ENCODE measurements at regions of chr9 and their contacts with region 1.

Region 1: DNA sequence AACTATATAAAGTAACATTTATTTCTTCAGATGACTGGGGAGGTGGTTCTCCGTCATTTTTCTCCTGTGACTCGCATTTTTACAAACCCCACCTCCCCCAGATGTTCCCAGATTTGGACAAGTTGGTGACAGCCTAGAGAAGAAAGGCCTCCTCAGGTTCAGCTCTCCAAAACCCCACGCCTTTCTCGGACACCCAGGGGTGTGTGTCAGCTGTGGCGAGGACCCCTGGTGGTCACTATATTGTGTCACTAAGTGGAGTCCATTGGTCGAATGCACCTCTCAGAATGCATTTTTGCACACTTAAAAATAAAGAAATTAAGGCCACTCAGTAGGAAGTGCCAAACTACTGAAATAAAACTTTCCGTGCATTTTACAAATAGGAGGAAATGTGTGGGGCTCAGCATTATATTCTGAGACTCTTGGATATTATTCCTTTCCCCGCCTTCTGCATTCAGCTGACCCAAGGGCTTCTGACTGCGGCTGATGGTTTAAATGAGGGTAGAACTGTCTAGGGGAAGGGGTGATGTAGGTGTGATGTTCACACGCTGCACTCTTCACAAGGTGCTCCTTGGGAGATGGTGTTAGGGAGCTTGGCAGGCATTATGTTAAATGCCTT is 47.6 kb downstream of the ACO1 start:
- DNase-seq: no peak
- H3K4me3 ChIP-seq: no peak overlapping the region
- H3K27ac ChIP-seq: peak overlapping the region; percentile 52; the same call in 1 of the 2 replicates
- H3K4me1 ChIP-seq: peaks cover 18% of the 10 kb centered on the region
- H3K27me3 ChIP-seq: no peaks in the 10 kb centered on the region
- CTCF ChIP-seq: peak; percentile 40; the same call in 1 of the 2 replicates

Region 2: GRCh38 chr9:32360983-32361673 is 70.9 kb before region 1 on chr9:
- CTCF ChIA-PET with region 1: no interaction called
- POLR2A ChIA-PET with region 1: no interaction called
- intact Hi-C with region 1: no loop called
- DNase-seq: no peak
- H3K4me3 ChIP-seq: no peak overlapping the region
- H3K27ac ChIP-seq: no peak overlapping the region
- H3K4me1 ChIP-seq: no peaks in the 10 kb centered on the region
- H3K27me3 ChIP-seq: no peaks in the 10 kb centered on the region
- CTCF ChIP-seq: no peak

Region 3: GRCh38 chr9:32384364-32385151 is 47.5 kb before region 1 on chr9 and contains the start of gene ACO1:
- CTCF ChIA-PET with region 1: interaction called, 6 read pairs
- POLR2A ChIA-PET with region 1: interaction called, 4 read pairs
- intact Hi-C with region 1: loop called (anchors 2 kb)
- DNase-seq: peak; percentile 62 to 87
- H3K4me3 ChIP-seq: peak within 1 kb of the TSS; percentile 84
- H3K27ac ChIP-seq: no peak within 1 kb of the TSS
- H3K4me1 ChIP-seq: no peaks in the 10 kb centered on the region
- H3K27me3 ChIP-seq: no peaks in the 10 kb centered on the region
- CTCF ChIP-seq: no peak
- total RNA-seq, gene ACO1: 26.1 and 30.2 TPM in 2 replicates

Region 4: DNA sequence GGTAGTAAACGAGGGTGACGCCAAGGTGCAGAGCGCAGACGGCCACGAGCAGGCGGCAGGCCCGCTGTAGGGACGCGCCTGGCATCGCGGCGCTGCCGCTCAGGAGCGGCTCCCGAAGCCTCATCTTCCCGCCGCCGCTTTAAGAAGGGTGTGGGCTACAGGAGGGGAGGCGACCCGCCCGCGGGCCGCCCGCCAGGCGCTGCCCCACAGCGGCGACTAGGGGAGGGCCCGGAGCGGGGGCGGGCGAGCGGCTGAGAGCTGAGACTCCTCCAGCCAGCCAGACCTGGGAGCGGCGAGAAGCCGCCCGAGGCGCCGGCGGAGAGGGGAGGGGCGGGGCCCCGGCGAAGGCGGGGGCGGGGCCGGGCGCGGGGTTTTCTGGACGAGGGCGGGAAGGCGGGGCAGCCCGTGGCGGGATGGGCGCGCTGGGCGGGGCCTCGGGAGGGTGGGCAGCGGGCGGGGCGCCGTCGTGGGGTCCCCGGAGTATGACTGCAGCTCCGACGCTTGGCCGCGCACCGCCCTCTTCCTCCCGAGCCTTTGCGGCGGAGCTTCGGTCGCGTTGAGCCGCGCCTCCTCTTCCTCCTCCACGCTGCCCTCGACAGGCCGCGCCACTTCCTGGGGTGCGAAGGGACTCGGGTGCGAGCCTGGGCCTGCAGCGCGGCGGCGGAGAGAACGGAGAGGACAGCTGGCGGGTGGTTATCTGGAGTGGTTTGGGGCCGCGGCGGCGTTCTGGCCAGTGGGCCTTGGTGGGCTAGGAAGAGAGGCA is 735.2 kb after region 1 on chr9 and contains the start of gene B4GALT1:
- CTCF ChIA-PET with region 1: no interaction called
- POLR2A ChIA-PET with region 1: interaction called, 17 read pairs
- intact Hi-C with region 1: no loop called
- DNase-seq: peak; percentile 69 to 93
- H3K4me3 ChIP-seq: peak within 1 kb of the TSS; percentile 93
- H3K27ac ChIP-seq: peak within 1 kb of the TSS; percentile 100
- H3K4me1 ChIP-seq: peaks cover 54% of the 10 kb centered on the region
- H3K27me3 ChIP-seq: no peaks in the 10 kb centered on the region
- CTCF ChIP-seq: no peak
- total RNA-seq, gene B4GALT1: 75.6 and 87.2 TPM in 2 replicates

Region 5: GRCh38 chr9:33233681-33234473 is 801.8 kb after region 1 on chr9:
- CTCF ChIA-PET with region 1: no interaction called
- POLR2A ChIA-PET with region 1: interaction called, 27 read pairs
- intact Hi-C with region 1: no loop called
- DNase-seq: peak; percentile 86 to 91
- H3K4me3 ChIP-seq: no peak overlapping the region
- H3K27ac ChIP-seq: peak overlapping the region; percentile 11; the same call in 1 of the 2 replicates
- H3K4me1 ChIP-seq: peaks cover 62% of the 10 kb centered on the region
- H3K27me3 ChIP-seq: no peaks in the 10 kb centered on the region
- CTCF ChIP-seq: no peak